Right cardiac atrium (tissue), 5 donors: ENCODE measurements at regions of chr12 and their contacts with region 1.

Region 1: DNA sequence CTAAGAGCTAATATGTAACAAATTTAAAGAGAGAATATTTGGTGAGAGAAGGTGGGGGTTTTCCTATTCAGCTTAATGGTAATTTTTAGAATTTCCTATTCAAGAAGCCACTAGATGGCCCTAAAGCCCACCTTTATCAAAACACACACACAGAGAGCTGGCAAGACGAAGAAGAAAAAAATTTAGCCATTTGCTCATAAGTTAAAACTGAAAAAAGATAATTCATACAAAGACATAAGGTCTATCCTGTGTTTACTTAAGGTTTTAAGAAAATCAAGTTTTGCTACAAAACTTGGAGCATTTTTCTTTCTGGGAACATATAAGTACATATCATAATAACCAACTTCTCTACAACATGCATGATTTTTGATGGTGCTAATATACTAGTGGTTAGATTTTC is 46.8 kb upstream of the PCED1B start:
- DNase-seq: no peak
- ATAC-seq: peak; percentile 78 to 81
- H3K4me3 ChIP-seq: no peak overlapping the region
- H3K27ac ChIP-seq: no peak overlapping the region
- H3K4me1 ChIP-seq: no peaks in the 10 kb centered on the region
- H3K27me3 ChIP-seq: no peaks in the 10 kb centered on the region

Region 2: DNA sequence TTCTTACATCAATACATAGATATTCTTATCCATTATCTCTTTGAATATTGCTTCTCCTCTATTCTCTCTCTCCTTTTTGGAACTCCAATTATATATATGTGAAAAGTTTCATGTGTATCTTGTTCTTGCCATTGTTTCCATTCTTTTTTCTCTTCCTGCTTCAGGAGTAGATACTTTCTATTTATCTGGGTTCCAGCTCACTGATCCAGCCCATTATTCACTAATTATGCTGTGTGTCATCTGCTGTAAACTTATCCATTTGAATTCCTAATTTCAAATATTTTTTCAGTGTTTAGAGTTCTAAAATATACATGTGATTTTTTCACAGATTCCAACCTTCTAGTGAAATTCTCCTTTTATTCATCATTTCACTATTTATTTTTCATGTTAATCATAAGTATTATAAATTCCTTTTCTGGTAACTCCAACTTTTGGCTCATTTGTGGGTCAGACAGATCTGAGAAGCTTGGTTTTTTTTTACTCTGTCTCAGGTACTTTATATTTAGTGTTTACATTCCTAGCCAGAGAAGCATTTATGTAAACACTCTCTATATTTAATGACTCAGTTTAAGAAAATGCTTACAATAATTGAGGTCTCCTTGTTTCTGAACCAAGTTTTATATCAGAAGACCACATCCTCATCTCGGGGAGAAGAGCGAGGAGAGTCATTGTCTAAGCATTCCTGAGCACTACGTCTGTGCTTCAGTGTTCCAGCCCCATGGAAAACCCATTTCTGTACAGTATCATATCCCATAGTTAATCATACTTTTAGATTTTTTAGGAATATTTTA is 63.0 kb after region 1 on chr12:
- intact Hi-C with region 1: no loop called
- DNase-seq: no peak
- ATAC-seq: no peak
- H3K4me3 ChIP-seq: no peak overlapping the region
- H3K27ac ChIP-seq: no peak overlapping the region
- H3K4me1 ChIP-seq: peaks cover 4% of the 10 kb centered on the region
- H3K27me3 ChIP-seq: no peaks in the 10 kb centered on the region

Region 3: DNA sequence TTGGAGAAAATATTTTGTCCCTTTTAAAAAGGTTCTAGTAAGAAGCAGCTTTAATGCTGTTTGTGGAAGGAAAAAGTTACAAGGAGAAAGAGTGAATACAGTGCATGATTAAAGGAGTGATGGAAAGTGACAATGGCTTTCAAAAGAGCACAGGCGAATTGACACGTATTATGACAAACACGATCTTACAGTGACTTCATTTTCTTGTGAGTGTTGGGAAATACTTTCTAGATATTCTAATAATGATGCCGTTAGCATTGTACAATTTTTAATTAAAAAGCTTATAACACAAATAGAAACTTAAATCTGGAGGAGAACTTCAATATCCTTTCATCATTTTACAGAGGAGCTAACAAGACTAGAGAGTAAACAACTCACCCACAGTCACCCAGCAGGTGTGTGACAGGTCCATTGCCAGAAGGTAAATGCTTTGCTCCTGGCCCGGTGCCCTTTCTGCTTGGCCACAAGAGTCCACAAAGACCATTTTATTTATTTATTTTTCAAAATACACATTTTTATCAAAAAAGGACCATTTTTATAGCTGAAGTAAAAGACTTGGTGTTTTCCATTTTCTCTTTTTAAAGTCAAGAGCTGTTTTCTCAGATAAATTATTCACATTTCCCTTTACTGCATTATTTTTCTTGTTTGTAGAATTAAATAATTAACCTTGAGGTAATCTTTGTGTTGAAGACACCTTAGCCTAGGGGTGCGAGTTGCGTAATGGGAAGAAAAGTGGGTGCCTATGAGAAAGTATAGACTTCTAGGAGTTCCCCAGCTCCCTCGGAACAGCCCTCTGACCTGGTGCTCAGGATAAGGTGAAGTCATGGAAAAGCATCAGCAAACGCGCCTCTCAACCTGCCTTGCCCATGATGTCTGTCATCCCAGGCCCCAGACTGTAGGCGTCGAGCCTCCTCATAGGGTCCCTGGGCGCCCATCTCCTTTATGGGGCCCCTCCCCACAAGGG is 73.3 kb after region 1 on chr12:
- intact Hi-C with region 1: no loop called
- DNase-seq: no peak
- ATAC-seq: no peak
- H3K4me3 ChIP-seq: no peak overlapping the region
- H3K27ac ChIP-seq: no peak overlapping the region
- H3K4me1 ChIP-seq: no peaks in the 10 kb centered on the region
- H3K27me3 ChIP-seq: no peaks in the 10 kb centered on the region

Region 4: DNA sequence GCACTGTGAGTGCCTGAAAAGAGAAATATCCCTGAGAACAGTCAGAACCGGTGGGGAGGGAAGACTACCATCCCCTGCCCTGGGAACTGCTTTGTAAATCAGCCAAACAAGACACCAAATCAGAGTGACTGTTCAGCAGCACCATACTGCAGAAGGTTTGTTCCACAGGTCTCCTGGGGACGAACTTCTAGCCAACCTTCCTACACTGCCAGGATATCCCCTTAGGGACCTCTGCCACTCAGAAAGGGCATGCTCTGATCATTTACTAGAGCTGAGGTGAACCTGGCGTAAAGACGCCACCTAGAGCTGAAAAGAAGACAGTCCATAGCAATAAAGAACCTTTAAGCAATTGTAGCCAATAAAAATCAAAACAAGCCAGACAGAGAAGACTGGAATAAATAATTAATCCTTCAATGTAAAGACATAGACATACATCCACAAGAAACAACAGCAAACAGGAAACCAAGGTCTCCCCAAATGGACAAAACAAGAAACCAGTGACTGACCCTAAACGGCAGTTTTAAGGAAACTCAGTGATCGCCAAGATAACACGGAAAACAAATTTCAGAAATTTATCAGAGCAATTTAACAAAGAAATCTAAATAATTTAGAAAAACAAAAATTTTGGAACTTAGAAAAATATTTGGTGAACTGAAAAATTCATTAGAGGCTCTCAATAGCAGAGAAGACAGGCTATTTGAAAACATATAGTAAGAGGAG is 275.2 kb after region 1 on chr12:
- intact Hi-C with region 1: loop called in 3 of 4 experiments (anchors 10 kb)
- DNase-seq: peak in 1 of 3 donors; percentile 11
- ATAC-seq: peak; percentile 82 to 86
- H3K4me3 ChIP-seq: no peak overlapping the region
- H3K27ac ChIP-seq: no peak overlapping the region
- H3K4me1 ChIP-seq: no peaks in the 10 kb centered on the region
- H3K27me3 ChIP-seq: no peaks in the 10 kb centered on the region

Region 5: GRCh38 chr12:47312808-47313426 is 280.3 kb after region 1 on chr12:
- intact Hi-C with region 1: loop called in 3 of 4 experiments (anchors 10 kb)
- DNase-seq: no peak
- ATAC-seq: no peak
- H3K4me3 ChIP-seq: no peak overlapping the region
- H3K27ac ChIP-seq: no peak overlapping the region
- H3K4me1 ChIP-seq: no peaks in the 10 kb centered on the region
- H3K27me3 ChIP-seq: no peaks in the 10 kb centered on the region

Region 6: GRCh38 chr12:47397664-47398281 is 365.1 kb after region 1 on chr12:
- intact Hi-C with region 1: loop called in 2 of 4 experiments (anchors 5 to 10 kb)
- DNase-seq: peak in 1 of 3 donors; percentile 30
- ATAC-seq: peak; percentile 48 to 61
- H3K4me3 ChIP-seq: no peak overlapping the region
- H3K27ac ChIP-seq: no peak overlapping the region
- H3K4me1 ChIP-seq: no peaks in the 10 kb centered on the region
- H3K27me3 ChIP-seq: no peaks in the 10 kb centered on the region

Region 7: GRCh38 chr12:47686645-47687240 is 654.1 kb after region 1 on chr12:
- intact Hi-C with region 1: loop called (anchors 10 kb)
- DNase-seq: no peak
- ATAC-seq: peak; percentile 41 to 57
- H3K4me3 ChIP-seq: no peak overlapping the region
- H3K27ac ChIP-seq: no peak overlapping the region
- H3K4me1 ChIP-seq: no peaks in the 10 kb centered on the region
- H3K27me3 ChIP-seq: no peaks in the 10 kb centered on the region